ENCODE measurements at regions of chr6 and their contacts with region 1.

Region 1: GRCh38 chr6:107674995-107675738 is 148.9 kb downstream of the SCML4 start:
- DNase-seq: peak; percentile 76
- H3K4me3 ChIP-seq: peak overlapping the region; percentile 48
- H3K27ac ChIP-seq: no peak overlapping the region
- H3K4me1 ChIP-seq: peaks cover 27% of the 10 kb centered on the region
- H3K27me3 ChIP-seq: no peaks in the 10 kb centered on the region
- CTCF ChIP-seq: peak; percentile 95

Region 2: DNA sequence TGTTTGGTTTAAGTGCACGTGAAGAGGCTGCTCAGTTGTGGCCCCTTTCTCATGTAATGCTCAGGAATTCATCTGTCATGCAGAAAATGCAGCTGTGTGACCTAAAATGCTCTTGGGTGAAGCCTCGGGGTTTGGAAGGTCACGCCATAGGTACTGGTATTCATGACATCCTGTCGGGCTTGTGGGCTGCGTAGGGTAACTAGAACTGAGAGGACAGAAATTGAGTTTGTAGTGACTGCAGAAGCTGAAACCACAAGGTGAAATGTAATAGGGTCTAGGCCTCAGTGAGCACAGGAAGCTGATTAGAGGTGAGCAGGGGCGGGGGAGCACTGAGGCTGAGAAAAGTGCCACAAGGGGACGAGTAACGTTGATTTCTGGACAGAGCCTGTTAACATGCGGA is 56.5 kb before region 1 on chr6:
- intact Hi-C with region 1: no loop called
- DNase-seq: no peak
- H3K4me3 ChIP-seq: no peak overlapping the region
- H3K27ac ChIP-seq: no peak overlapping the region
- H3K4me1 ChIP-seq: peaks cover 47% of the 10 kb centered on the region
- H3K27me3 ChIP-seq: no peaks in the 10 kb centered on the region
- CTCF ChIP-seq: no peak

Region 3: DNA sequence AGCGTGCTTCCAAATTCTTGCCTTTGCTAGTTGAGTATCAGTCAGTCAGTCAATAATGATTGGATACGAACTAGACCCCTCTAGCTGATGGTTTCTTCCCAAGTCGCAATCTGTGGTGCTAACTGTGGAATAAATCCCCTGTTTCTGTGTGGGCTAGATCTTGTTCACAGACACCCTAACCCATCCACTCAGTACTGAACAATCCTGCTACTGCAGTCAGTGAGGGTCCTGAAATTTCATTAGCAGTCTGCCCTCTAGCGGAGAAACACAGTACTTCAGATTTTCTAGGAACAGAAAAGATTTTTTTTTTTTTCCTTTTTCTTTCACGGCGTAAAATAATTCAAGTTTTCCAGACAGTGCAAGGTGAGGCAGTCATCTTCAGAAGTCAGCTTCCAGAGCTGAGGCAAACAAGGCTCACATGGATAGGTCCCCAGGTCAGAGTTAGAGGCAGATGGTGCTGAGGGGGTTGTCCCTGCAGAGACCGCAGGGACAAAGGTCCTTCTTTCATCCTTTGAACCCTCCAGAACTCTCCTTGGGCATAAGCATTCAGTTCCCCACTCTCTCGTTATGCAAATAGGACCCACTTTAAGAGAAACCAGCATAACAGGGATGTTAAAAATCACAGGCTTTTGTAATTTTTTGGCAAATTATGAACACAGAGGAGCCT is 29.3 kb after region 1 on chr6:
- intact Hi-C with region 1: loop called (anchors 2 kb)
- DNase-seq: no peak
- H3K4me3 ChIP-seq: no peak overlapping the region
- H3K27ac ChIP-seq: no peak overlapping the region
- H3K4me1 ChIP-seq: no peaks in the 10 kb centered on the region
- H3K27me3 ChIP-seq: peaks cover 6% of the 10 kb centered on the region
- CTCF ChIP-seq: peak; percentile 88

Region 4: DNA sequence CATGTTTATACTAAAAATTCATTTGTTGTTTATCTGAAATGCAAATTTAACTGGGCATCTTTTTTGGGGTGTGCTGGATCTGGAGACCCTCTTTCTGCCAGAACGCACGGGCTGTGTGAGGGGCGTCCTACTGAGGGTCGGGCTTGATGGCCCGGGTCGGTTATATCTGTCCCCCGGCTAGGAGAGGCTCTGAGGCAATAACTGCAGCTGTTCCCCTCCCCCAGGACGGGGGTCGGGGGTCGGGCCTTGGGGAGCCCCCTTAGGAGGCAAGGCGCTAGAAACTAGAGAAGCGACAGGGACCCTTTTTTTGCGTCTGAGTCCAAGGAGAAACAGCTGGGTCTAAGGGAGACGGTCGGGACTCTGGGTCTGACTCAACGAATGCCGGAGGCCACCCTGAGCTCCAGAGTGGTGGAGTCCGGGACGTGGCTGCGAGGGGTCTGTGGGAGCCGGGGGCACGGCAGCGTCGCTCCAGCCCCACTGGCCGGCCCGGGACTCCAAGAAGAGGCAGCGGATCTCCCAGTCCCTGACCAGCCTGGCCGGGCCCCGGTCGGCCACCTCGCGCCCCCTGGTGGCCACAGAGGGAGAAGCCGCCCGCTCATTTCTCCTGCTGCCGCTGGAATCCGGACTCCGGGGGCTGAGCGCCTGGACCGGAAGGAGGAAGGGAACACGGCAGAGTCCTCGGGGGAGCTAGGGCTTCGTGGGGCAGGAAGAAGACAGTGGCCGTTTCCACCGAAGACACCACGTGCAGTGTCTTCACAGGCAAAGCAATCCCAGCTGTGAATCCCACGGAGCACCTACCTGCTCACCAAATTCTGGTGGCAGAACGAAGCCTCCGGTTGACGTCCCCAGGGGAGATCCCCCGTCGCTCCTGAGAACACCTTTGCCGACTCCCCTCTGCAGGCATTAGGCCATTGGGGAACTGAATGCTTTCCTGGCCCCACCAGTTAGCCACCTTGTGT is 173.0 kb after region 1 on chr6:
- intact Hi-C with region 1: loop called (anchors 10 kb)
- DNase-seq: peak; percentile 84
- H3K4me3 ChIP-seq: peak overlapping the region; percentile 60
- H3K27ac ChIP-seq: no peak overlapping the region
- H3K4me1 ChIP-seq: peaks cover 11% of the 10 kb centered on the region
- H3K27me3 ChIP-seq: peaks cover 40% of the 10 kb centered on the region
- CTCF ChIP-seq: peak; percentile 97

Region 5: GRCh38 chr6:108105571-108105970 is 430.4 kb after region 1 on chr6:
- intact Hi-C with region 1: no loop called
- DNase-seq: no peak
- H3K4me3 ChIP-seq: no peak overlapping the region
- H3K27ac ChIP-seq: no peak overlapping the region
- H3K4me1 ChIP-seq: no peaks in the 10 kb centered on the region
- H3K27me3 ChIP-seq: peaks cover 30% of the 10 kb centered on the region
- CTCF ChIP-seq: no peak